Dorsolateral prefrontal cortex (tissue), 120 donors: ENCODE measurements at regions of chr12 and their contacts with region 1.

Region 1: DNA sequence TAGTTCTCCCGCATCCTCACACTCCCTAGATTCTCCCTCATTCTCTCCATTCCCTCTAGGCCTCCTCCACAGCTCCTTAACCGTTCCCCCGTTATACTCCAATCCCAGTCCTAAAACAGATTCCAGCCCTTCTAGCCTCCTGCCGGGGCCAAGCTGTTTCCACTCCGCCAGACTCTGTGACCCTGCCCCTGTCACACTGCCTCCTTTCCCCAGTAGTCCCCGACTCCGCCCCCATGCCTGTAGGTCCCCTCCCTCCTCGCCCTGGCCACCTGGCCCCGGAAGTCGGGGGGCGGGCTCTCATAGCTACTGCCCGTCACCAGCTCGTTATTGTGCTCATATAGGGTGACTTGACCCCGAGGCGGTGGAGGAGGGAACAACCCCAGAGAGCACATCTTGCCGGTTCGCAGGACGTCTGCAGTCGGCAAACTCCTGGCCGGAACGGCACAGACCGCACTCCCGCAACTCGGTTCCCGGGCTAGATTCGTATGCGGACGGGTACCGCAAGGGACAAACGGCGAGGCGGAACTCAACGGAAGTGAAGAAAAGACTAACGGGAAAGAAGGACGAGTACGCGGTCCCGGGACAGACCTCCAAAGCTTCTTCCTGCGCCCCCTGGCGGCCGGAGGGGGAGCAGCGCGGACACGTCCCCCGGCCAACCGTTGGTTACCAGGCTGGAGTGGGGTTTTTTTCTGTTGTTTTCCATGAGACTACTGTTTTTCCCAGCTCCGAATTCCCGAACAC is at the start of gene AAAS:
- DNase-seq: peak; percentile 93 to 97 (median 95)
- H3K4me3 ChIP-seq: peak within 1 kb of the TSS; percentile 54 to 90 (median 77)
- H3K27ac ChIP-seq: peak within 1 kb of the TSS; percentile 82 to 99 (median 96)
- H3K27me3 ChIP-seq: no peaks in the 10 kb centered on the region
- CTCF ChIP-seq: peak; percentile 95 to 100 (median 99)
- total RNA-seq, gene AAAS: 27.3 to 61.7 (median 45.5) TPM

Region 2: DNA sequence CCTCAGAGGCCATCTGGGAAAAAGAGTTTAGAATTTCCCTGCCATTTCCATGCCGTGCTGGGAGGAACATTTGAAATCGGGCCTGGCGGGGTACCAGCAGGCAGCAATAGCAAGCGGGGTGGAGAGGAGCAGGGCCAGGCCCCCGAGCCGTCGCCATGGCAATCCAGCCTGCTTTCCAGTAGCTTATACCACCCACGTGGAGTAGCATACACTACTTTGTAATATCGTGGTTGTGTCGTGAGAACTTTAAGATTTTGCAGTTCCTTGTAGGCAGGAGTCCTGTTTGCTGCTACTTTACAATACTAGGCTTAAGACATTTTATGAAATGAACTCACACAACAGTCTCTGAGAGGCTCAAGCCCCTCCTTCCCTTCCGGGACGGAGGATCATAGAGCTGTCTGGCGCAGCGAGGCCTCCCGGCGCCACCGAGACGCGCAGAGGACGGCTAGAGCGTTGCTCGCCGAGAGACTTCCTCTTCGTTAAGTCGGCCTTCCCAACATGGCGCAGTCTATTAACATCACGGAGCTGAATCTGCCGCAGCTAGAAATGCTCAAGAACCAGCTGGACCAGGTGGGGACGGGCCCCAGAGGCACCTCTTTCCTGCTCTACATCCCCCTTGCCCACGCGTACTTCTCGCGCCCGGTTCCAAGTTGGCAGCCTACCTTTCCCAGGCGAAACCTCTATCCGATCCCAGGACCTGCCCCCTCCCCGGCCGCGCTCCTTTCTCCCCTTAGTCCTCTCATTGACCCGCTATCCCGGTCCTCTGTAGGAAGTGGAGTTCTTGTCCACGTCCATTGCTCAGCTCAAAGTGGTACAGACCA is 26.0 kb before region 1 on chr12 and contains the start of gene PFDN5:
- intact Hi-C with region 1: loop called (anchors 1 to 2 kb)
- DNase-seq: peak; percentile 70 to 92 (median 92)
- H3K4me3 ChIP-seq: peak within 1 kb of the TSS; percentile 62 to 99 (median 88)
- H3K27ac ChIP-seq: peak within 1 kb of the TSS; percentile 27 to 96 (median 87)
- H3K27me3 ChIP-seq: no peaks in the 10 kb centered on the region
- CTCF ChIP-seq: peak in 53 of 56 donors; percentile 11 to 65 (median 42)
- total RNA-seq, gene PFDN5: 256 to 374 (median 306) TPM

Region 3: GRCh38 chr12:53344824-53345485 is 23.7 kb after region 1 on chr12:
- intact Hi-C with region 1: loop called (anchors 1 kb)
- DNase-seq: peak; percentile 42 to 86 (median 80)
- H3K4me3 ChIP-seq: peak overlapping the region; percentile 50 to 90 (median 80)
- H3K27ac ChIP-seq: peak overlapping the region; percentile 82 to 100 (median 98)
- H3K27me3 ChIP-seq: no peaks in the 10 kb centered on the region
- CTCF ChIP-seq: peak in 55 of 56 donors; percentile 45 to 96 (median 82)

Region 4: GRCh38 chr12:53379389-53380103 is 58.3 kb after region 1 on chr12:
- intact Hi-C with region 1: loop called (anchors 2 kb)
- DNase-seq: peak; percentile 95 to 100 (median 100)
- H3K4me3 ChIP-seq: peak overlapping the region; percentile 49 to 97 (median 76)
- H3K27ac ChIP-seq: peak overlapping the region; percentile 86 to 100 (median 98)
- H3K27me3 ChIP-seq: no peaks in the 10 kb centered on the region
- CTCF ChIP-seq: peak in 11 of 56 donors; percentile 5 to 34 (median 14)

Region 5: GRCh38 chr12:53492830-53493611 is 171.8 kb after region 1 on chr12:
- intact Hi-C with region 1: loop called in 1 of 2 experiments (anchors 10 kb)
- DNase-seq: peak; percentile 93 to 98 (median 96)
- H3K4me3 ChIP-seq: peak overlapping the region; percentile 51 to 80 (median 67)
- H3K27ac ChIP-seq: peak overlapping the region; percentile 48 to 96 (median 90)
- H3K27me3 ChIP-seq: no peaks in the 10 kb centered on the region
- CTCF ChIP-seq: peak in 27 of 56 donors; percentile 11 to 50 (median 32)

Region 6: DNA sequence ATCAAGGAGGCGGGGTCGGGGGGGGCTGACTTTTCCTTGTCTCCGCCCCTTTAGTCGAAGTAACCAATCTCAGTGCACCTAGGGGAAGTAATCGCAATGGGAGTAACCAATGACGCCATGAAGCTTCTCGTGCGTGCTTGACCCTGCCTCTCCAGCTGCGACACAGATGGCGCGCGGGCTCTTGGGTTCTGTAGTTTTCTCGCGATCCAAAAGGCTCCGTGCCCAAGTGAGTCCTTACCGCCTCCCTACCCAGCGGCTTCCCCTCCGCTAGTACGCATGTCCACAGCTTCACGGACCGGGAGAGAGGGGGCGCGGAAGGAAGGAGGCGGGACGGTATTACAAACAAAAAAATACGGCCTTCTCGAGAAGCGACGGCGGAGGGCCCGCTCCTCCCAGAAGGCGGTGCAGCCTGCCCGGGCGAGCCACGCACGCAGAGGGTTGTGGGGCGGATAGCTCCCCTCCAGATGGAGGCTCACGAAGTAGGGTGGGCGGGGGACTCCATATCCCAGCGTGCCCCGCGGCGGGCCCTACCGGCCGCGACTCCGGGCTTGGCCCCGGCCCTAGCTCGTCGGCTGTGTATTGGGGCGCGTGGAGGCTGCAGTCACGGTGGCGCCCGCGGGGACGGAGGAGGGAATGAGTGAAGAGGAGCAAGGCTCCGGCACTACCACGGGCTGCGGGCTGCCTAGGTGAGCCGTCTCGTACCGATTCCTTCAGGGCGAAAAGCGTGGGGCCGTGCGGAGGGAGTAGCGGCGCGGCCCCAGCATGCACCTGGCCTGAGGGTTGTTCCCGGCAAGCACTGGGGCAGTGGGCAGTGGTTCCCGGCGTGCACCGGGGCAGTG is 179.8 kb after region 1 on chr12 and contains the start of gene TARBP2:
- intact Hi-C with region 1: loop called (anchors 5 to 10 kb)
- DNase-seq: peak; percentile 95 to 99 (median 99)
- H3K4me3 ChIP-seq: peak within 1 kb of the TSS; percentile 52 to 100 (median 80)
- H3K27ac ChIP-seq: peak within 1 kb of the TSS; percentile 94 to 100 (median 99)
- H3K27me3 ChIP-seq: no peaks in the 10 kb centered on the region
- CTCF ChIP-seq: peak in 40 of 56 donors; percentile 2 to 60 (median 28)
- total RNA-seq, gene TARBP2: 10.9 to 29.5 (median 20.9) TPM

Region 7: DNA sequence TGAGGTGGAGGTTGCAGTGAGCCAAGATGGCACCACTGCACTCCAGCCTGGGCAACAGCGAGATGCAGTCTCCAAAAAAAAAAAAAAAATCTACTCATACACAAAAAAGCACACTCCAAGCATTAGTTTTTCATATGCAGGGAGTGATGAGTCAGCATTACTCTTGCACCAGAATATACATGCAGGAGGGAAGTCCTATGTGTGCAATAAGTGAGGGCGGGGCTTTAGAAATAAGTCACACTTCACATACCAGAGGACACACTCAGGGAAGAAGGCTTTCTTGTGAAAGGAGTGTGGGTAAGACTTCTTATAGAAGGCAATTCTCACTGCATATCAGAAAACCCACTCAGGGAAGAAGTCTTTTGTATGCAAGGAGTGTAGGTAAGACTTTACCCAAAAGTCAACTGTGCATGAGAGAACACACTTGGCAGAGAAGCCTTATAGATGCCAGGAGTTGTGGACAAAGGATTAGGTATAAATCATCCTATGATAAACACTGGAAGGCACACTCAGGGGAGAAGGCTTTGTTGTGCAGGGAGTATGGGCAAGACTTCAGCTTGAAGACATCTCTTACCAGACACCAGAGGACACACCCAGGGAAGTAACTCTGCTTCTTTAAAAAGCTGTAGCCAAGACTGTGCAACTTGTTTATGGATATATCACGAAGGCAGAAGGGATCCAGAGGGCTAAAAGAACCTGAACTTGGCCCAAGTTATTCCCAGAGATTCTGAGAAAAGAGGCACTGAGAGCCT is 254.4 kb after region 1 on chr12:
- intact Hi-C with region 1: no loop called
- DNase-seq: no peak
- H3K4me3 ChIP-seq: no peak overlapping the region
- H3K27ac ChIP-seq: peak overlapping the region in 1 of 59 donors; percentile 12
- H3K27me3 ChIP-seq: no peaks in the 10 kb centered on the region
- CTCF ChIP-seq: no peak